ENCODE measurements at regions of chr14 and their contacts with region 1.

Region 1: GRCh38 chr14:71753126-71753830 is 179.0 kb upstream of the RGS6 start:
- DNase-seq: peak; percentile 48 to 81 (median 73)
- ATAC-seq: peak; percentile 58
- H3K4me3 ChIP-seq: no peak overlapping the region
- H3K4me3 Mint-ChIP-seq: no peak overlapping the region
- H3K27ac ChIP-seq: no peak overlapping the region
- H3K27ac Mint-ChIP-seq: no peak overlapping the region
- H3K4me1 ChIP-seq: peaks cover 4% of the 10 kb centered on the region
- H3K4me1 Mint-ChIP-seq: no peaks in the 10 kb centered on the region
- H3K27me3 ChIP-seq: no peaks in the 10 kb centered on the region
- H3K27me3 Mint-ChIP-seq: no peaks in the 10 kb centered on the region
- CTCF ChIP-seq: peak; percentile 90

Region 2: GRCh38 chr14:71049435-71050133 is 703.7 kb before region 1 on chr14:
- CTCF ChIA-PET with region 1: interaction called, 3 read pairs
- POLR2A ChIA-PET with region 1: no interaction called
- intact Hi-C with region 1: loop called in 1 of 2 experiments (anchors 2 kb)
- DNase-seq: no peak
- ATAC-seq: no peak
- H3K4me3 ChIP-seq: no peak overlapping the region
- H3K4me3 Mint-ChIP-seq: no peak overlapping the region
- H3K27ac ChIP-seq: no peak overlapping the region
- H3K27ac Mint-ChIP-seq: no peak overlapping the region
- H3K4me1 ChIP-seq: no peaks in the 10 kb centered on the region
- H3K4me1 Mint-ChIP-seq: peaks cover 12% of the 10 kb centered on the region
- H3K27me3 ChIP-seq: no peaks in the 10 kb centered on the region
- H3K27me3 Mint-ChIP-seq: no peaks in the 10 kb centered on the region
- CTCF ChIP-seq: no peak

Region 3: GRCh38 chr14:71103662-71104484 is 649.4 kb before region 1 on chr14:
- CTCF ChIA-PET with region 1: interaction called, 23 read pairs
- POLR2A ChIA-PET with region 1: no interaction called
- intact Hi-C with region 1: loop called (anchors 1 kb)
- DNase-seq: peak in 3 of 9 experiments; percentile 17 to 67 (median 53)
- ATAC-seq: peak; percentile 55
- H3K4me3 ChIP-seq: no peak overlapping the region
- H3K4me3 Mint-ChIP-seq: no peak overlapping the region
- H3K27ac ChIP-seq: no peak overlapping the region
- H3K27ac Mint-ChIP-seq: peak overlapping the region; percentile 14
- H3K4me1 ChIP-seq: no peaks in the 10 kb centered on the region
- H3K4me1 Mint-ChIP-seq: peaks cover 8% of the 10 kb centered on the region
- H3K27me3 ChIP-seq: no peaks in the 10 kb centered on the region
- H3K27me3 Mint-ChIP-seq: no peaks in the 10 kb centered on the region
- CTCF ChIP-seq: peak; percentile 88

Region 4: GRCh38 chr14:71739273-71739937 is 13.9 kb before region 1 on chr14:
- CTCF ChIA-PET with region 1: interaction called, 51 read pairs
- POLR2A ChIA-PET with region 1: no interaction called
- intact Hi-C with region 1: no loop called
- DNase-seq: peak in 1 of 9 experiments; percentile 17
- ATAC-seq: no peak
- H3K4me3 ChIP-seq: no peak overlapping the region
- H3K4me3 Mint-ChIP-seq: no peak overlapping the region
- H3K27ac ChIP-seq: no peak overlapping the region
- H3K27ac Mint-ChIP-seq: peak overlapping the region; percentile 42
- H3K4me1 ChIP-seq: no peaks in the 10 kb centered on the region
- H3K4me1 Mint-ChIP-seq: no peaks in the 10 kb centered on the region
- H3K27me3 ChIP-seq: no peaks in the 10 kb centered on the region
- H3K27me3 Mint-ChIP-seq: no peaks in the 10 kb centered on the region
- CTCF ChIP-seq: no peak

Region 5: DNA sequence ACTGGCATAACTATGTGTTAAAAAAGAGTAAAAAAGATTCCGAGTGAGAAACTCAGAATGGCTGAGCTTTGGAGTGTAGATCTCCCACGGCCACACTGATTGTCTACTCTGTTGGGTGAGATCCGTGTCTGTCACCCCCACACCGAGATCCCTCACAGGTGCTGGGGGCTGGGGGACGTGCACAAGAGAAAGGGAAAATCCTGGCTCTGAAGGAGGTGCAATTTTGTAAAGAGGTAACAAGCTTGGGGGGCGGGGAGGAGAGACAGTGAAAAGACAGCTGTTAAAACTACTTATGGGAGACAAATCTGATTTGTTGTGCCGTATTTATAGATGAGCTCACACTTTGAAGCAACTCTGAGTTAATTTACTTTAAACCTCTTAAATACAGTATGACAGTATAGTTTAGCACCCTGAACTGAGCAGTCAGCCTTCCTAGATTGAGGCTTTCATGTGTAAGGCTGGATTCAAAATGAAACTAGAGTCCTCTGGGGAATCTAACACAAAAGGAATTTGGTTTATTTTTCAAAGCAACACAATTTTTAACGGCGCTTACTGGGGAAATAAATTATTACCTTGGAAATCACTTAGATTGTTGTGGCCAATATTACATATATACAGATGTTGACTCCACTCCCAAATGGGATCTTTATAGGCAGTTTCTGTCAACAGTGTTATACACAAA is 11.6 kb after region 1 on chr14:
- CTCF ChIA-PET with region 1: interaction called, 11 read pairs
- POLR2A ChIA-PET with region 1: no interaction called
- intact Hi-C with region 1: no loop called
- DNase-seq: no peak
- ATAC-seq: no peak
- H3K4me3 ChIP-seq: no peak overlapping the region
- H3K4me3 Mint-ChIP-seq: no peak overlapping the region
- H3K27ac ChIP-seq: no peak overlapping the region
- H3K27ac Mint-ChIP-seq: no peak overlapping the region
- H3K4me1 ChIP-seq: no peaks in the 10 kb centered on the region
- H3K4me1 Mint-ChIP-seq: no peaks in the 10 kb centered on the region
- H3K27me3 ChIP-seq: peaks cover 0 to 2% of the 10 kb centered on the region in 2 experiments
- H3K27me3 Mint-ChIP-seq: peaks cover 5% of the 10 kb centered on the region
- CTCF ChIP-seq: no peak

Region 6: DNA sequence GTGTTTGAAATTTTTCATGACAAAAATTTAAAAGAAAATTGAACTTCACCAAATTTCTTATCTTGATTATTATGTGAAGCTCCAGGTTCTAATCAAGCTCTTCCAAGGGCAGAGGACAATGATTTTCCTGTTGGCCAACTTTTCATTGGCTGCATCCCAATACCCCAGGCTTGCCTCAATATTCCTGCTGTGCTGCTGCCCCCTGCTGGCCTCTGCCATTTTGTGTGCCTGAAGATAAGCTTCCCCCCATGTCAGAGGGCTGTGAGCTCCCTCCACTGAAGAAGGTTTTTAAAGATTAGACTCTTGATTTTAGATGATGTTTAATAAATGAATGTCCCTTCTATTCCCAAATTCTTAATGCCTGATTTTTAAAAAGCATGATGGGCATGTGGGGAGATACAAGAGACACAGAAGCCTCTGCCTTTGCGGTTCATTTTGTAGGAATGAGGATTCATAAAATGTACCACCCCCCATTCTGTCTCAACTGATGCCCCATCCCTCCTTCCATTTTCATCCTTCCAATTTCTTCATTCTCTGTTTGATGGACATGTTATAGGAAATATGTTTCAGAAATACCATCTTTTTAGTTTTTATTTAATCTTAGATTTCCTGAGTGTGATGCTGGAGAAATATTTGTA is 102.2 kb after region 1 on chr14:
- CTCF ChIA-PET with region 1: no interaction called
- POLR2A ChIA-PET with region 1: no interaction called
- intact Hi-C with region 1: no loop called
- DNase-seq: peak in 8 of 9 experiments; percentile 19 to 58 (median 40)
- ATAC-seq: no peak
- H3K4me3 ChIP-seq: no peak overlapping the region
- H3K4me3 Mint-ChIP-seq: no peak overlapping the region
- H3K27ac ChIP-seq: no peak overlapping the region
- H3K27ac Mint-ChIP-seq: no peak overlapping the region
- H3K4me1 ChIP-seq: no peaks in the 10 kb centered on the region
- H3K4me1 Mint-ChIP-seq: no peaks in the 10 kb centered on the region
- H3K27me3 ChIP-seq: peaks cover 2 to 7% of the 10 kb centered on the region in 2 experiments
- H3K27me3 Mint-ChIP-seq: peaks cover 41% of the 10 kb centered on the region
- CTCF ChIP-seq: peak; percentile 41